ENCODE measurements at regions of chr12 and their contacts with region 1.

Region 1: DNA sequence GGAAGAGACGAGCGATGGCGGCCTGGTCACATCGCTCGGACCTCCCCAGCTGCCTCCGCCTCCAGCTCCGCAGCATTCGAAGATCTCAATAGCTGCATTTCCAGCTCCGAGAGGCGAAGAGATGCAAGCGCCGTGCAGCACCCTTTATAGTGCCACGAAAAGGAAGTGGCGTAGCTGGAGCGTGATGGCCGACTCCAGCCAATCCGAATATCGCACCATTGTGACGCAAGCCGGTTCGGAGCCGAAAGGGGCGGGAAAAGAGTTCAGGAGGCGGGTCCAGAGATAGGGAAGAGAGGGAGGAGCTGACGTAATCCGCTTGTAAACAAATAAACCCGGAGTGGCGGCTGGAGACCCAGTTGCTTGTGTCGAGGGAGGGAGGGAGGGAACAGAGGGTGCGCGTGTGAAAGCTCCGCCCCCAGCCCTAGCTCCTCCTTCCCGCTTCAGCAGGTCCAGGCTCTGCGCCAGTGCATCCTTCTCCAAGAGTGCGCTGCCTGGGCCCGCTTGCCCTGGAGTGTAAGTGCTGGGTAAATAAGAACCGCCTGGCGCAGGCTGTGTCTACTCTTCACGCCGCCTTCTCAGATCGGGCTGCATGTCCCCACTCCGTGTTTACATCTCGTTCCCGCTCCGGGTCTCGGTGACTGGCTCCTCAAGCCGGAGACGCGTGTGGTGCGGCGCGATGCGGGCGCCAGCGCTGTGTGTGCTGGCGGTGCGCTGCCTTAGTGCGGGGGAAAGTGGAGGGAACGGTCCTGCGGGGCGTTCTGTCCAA is at the start of gene BTG1:
- DNase-seq: peak; percentile 98
- ATAC-seq: peak; percentile 91
- total RNA-seq, gene BTG1: 66.9 TPM

Region 2: DNA sequence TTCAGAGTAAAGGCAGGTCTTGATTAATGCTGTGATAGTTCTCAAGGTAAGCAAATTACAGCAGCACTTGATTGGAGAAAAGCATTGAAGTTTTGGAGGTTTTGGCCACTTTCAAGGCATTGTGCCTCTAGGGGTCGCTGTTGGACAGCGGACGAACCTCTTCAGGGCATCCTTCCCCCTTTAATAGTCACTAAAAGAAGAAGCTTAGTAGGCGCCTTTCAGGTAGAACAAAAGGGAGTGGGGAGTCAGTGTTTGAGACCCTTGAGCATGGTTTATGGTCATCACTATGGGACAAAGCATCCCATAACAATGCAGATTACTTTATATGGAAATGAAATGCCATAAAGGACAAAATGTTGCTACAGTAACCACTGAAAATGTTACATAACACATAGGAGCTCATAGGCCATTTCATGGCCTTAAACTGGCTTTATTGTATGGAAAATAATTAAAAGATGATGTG is 763.8 kb before region 1 on chr12:
- intact Hi-C with region 1: loop called (anchors 5 kb)
- DNase-seq: peak; percentile 78
- ATAC-seq: peak; percentile 89

Region 3: DNA sequence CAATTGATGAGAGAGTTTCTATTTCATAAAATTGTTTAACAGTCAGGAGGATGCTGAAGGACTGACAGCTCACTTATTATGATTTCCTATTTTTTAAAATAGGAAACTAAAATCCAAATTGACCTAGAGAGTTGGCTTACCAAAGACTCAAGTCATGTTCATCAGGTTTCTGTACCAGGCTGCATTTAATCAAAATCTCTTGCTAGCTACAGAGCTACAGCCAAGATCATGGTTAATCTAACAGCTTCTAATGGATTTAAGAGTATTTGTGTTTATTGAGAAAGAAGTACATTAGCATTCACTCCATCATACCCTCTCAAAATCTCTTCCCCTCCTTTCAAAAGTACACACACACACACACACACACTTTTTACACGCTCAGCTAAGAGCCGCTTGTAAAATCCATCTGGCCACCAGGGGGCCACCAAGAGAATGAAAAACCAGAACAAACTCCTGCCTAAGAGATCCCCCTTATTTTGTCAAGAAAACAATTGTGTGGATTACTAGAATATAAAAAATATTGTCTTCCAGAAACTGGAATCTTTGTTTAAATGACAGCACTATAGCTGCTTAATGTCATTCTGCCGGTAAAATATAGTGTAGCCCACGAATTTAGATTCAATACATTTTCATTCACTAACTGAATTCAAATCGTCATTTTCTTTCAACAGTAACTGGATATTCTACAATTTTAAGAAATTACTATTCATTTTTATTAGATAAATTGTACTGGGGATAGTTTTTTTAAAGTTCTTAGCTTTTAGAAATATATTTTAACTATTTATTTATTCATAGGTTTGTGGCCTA is 334.2 kb before region 1 on chr12:
- intact Hi-C with region 1: loop called (anchors 1 kb)
- DNase-seq: peak; percentile 77
- ATAC-seq: peak; percentile 71

Region 4: DNA sequence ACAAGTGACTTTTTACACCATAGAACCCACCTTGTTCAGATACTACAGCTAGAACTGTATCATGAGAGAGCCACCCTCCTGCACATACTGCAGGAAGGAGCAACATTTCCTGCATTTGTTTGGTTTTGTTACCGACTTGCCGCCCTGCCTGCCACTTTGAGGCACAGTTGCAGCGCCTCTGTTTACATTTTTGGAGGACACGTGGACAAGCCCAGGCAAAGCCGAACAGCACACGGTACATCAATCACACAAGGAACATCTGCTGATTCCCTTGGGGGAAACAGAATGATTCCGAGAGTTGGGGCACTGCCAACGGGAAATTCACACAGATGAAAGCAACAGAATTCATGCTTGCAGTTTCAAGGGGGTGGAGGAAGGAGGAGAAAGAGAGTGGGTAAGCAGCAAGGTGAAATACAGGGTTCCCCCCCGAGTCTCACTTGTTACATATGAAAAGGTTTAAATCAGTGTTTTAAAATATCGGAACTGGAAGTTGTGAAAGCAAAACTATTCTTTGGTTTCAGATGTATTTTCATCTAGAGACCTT is 111.0 kb before region 1 on chr12:
- intact Hi-C with region 1: loop called (anchors 5 kb)
- DNase-seq: no peak
- ATAC-seq: peak; percentile 52

Region 5: DNA sequence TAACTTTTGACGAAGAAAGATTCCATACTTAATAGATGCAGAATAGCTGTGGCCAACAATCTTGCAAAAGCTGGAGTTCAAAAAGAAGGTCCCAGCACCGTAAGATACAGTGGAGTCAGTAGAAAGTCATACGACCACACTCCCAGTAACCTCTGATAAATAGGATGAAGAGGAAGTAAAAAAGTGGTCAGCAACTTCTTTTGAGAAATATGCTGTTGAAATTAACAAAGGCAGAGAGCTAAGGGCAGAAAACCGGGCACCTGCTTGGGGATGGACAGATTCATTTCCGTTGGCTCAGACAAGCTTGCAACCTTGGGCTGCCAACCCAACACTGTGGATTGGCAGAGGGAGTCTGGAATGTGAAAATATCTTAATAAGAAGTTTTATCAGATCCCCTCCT is 40.2 kb before region 1 on chr12:
- intact Hi-C with region 1: no loop called
- DNase-seq: no peak
- ATAC-seq: no peak

Region 6: DNA sequence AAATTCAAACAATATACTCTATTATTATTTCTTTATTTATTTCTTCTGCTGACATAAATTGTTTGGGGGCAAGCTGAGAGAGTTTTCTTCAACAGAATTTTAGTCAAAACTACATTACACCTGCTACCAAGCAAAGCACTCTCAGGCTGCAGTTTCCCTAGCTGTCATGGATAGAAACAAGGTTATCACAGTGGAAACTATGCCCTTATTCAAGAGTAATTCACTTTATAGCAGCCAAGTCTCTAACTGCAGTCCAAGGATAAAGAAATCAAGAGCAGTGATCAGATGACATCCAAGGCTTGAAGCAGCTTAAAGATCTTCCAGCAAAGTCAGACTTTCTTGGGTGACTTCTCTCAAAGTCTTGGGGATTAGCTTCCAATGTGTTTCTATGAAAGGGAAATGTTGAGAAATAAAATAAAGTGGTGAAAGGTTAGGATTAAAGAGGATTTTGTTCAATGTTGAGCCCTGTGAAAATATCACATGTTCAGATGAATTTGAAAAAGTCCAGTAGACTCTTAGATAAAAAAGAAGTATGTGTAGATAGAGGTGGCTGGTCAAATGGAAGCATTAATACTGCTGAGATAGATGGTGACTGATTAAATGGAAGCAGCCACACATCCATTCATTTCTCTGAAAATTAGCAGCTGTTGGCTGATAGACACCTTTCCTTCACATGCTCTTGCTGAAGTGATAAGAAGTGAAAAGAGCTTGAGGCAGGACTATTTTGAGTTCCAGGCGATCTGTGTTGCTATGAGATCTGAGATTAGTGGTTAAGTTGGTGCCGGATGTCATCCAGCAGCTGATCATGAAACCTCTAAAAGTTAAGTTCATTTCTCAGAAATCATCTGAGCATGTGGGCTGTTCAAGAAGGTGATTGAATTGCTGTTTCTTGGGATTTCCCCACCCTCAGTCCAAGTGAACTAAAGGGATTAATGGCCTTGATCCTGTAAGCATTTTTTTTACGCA is 257.6 kb after region 1 on chr12:
- intact Hi-C with region 1: loop called (anchors 5 kb)
- DNase-seq: no peak
- ATAC-seq: no peak

Region 7: DNA sequence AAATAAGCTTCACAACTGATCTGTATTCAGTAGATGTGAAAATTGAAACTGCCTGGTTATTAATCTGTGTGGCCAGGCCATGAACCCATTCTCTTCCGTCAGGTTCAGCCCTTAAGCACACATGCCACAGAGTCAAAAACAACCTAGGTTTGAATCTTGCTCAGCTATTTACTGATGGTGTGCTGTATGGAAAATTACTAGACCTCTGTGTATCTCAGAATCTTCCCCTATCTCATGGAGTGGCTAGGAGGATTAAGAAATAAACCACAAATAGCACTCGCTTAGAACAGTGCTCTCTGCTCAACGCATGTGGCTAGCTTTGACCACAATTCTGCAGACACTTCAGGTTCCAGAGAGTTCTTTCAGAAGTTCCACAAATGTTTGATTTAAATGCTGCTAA is 316.1 kb after region 1 on chr12:
- intact Hi-C with region 1: no loop called
- DNase-seq: no peak
- ATAC-seq: no peak

Region 8: DNA sequence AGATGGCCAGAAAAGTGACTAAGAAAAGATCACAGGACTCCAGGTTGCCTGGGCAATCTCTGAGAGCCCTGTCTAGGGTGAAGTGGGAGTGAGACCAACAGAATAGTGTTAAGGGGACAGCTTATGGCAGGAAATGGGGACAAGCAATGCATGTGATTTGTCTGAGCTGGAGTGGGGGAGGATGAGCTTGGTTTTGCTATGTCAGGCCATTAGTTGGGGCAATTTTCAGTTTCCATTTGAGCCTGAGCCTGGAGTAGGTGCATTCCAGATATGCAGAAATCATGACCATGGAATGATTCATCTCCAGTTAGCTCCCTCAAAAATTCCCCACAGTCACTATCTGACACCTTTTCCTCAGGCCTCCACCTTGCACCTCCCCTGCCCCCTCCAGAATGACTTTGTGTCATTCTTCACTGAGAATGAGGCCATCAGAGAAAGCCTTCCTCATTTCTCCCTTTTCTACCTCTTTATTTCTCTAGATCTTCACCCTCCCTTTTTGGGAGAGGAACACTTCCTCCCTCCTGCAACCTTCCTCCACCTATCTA is 406.0 kb after region 1 on chr12:
- intact Hi-C with region 1: loop called (anchors 5 kb)
- DNase-seq: no peak
- ATAC-seq: no peak